ENCODE measurements at regions of chr12 and their contacts with region 1.

Region 1: GRCh38 chr12:104456417-104456949 is at the start of gene CHST11:
- DNase-seq: peak; percentile 74
- H3K4me3 Mint-ChIP-seq: peak within 1 kb of the TSS; percentile 98
- H3K27ac Mint-ChIP-seq: peak within 1 kb of the TSS; percentile 96
- H3K4me1 Mint-ChIP-seq: peaks cover 31% of the 10 kb centered on the region
- H3K27me3 Mint-ChIP-seq: no peaks in the 10 kb centered on the region
- total RNA-seq, gene CHST11: 41.0 and 50.6 TPM in 2 replicates

Region 2: DNA sequence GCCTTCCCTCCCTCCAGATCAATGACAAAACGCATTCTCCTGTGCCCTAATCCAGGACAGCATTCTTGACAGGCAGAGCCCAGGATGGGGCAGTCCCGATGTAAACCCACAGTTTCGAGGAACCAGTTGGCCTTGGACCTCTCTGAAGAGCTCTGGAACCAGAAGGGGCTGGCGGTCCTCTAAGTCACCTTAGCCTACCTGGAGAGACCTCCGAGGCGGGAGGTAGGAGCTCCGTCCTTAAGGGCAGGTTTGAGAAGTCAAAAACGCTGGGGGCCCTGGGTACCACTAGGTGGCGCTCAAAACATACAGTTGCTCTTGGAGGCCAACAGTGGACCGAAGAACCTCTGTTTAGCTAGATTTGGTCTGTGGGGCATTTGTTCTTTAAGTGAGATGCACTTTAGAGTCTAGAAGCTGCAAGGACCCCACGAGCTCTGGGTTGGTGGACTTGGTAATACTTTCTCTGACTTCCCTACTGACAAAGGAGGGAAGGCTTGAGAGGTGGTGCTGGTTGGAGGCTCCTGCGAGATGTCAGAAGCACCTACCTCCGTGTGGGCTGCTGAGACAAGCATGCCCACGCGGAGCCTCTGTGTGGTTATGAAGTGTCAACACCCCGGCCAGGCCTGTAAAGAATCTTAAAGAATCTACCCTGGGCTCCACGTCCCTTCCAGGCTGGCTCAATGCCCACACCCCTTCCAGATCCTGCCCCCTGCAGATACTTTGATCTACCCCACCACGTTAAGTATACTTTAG is 74.6 kb before region 1 on chr12:
- intact Hi-C with region 1: loop called (anchors 5 kb)
- DNase-seq: peak; percentile 63
- H3K4me3 Mint-ChIP-seq: no peak overlapping the region
- H3K27ac Mint-ChIP-seq: no peak overlapping the region
- H3K4me1 Mint-ChIP-seq: peaks cover 13% of the 10 kb centered on the region
- H3K27me3 Mint-ChIP-seq: peaks cover 9% of the 10 kb centered on the region

Region 3: GRCh38 chr12:104485651-104486362 is 29.3 kb after region 1 on chr12:
- intact Hi-C with region 1: loop called (anchors 1 kb)
- DNase-seq: peak; percentile 58
- H3K4me3 Mint-ChIP-seq: peak overlapping the region; percentile 30
- H3K27ac Mint-ChIP-seq: peak overlapping the region; percentile 82
- H3K4me1 Mint-ChIP-seq: peaks cover 85% of the 10 kb centered on the region
- H3K27me3 Mint-ChIP-seq: no peaks in the 10 kb centered on the region

Region 4: GRCh38 chr12:104582739-104583138 is 126.3 kb after region 1 on chr12:
- intact Hi-C with region 1: loop called (anchors 5 kb)
- DNase-seq: no peak
- H3K4me3 Mint-ChIP-seq: no peak overlapping the region
- H3K27ac Mint-ChIP-seq: no peak overlapping the region
- H3K4me1 Mint-ChIP-seq: peaks cover 67% of the 10 kb centered on the region
- H3K27me3 Mint-ChIP-seq: no peaks in the 10 kb centered on the region

Region 5: GRCh38 chr12:105107494-105108371 is 651.2 kb after region 1 on chr12 and contains the start of gene WASHC4:
- intact Hi-C with region 1: loop called (anchors 5 kb)
- DNase-seq: peak; percentile 94
- H3K4me3 Mint-ChIP-seq: peak within 1 kb of the TSS; percentile 96
- H3K27ac Mint-ChIP-seq: peak within 1 kb of the TSS; percentile 92
- H3K4me1 Mint-ChIP-seq: peaks cover 33% of the 10 kb centered on the region
- H3K27me3 Mint-ChIP-seq: peaks cover 16% of the 10 kb centered on the region
- total RNA-seq, gene WASHC4: 38.4 and 41.3 TPM in 2 replicates